B cell (primary cell): ENCODE measurements at regions of chr5 and their contacts with region 1.

Region 1: DNA sequence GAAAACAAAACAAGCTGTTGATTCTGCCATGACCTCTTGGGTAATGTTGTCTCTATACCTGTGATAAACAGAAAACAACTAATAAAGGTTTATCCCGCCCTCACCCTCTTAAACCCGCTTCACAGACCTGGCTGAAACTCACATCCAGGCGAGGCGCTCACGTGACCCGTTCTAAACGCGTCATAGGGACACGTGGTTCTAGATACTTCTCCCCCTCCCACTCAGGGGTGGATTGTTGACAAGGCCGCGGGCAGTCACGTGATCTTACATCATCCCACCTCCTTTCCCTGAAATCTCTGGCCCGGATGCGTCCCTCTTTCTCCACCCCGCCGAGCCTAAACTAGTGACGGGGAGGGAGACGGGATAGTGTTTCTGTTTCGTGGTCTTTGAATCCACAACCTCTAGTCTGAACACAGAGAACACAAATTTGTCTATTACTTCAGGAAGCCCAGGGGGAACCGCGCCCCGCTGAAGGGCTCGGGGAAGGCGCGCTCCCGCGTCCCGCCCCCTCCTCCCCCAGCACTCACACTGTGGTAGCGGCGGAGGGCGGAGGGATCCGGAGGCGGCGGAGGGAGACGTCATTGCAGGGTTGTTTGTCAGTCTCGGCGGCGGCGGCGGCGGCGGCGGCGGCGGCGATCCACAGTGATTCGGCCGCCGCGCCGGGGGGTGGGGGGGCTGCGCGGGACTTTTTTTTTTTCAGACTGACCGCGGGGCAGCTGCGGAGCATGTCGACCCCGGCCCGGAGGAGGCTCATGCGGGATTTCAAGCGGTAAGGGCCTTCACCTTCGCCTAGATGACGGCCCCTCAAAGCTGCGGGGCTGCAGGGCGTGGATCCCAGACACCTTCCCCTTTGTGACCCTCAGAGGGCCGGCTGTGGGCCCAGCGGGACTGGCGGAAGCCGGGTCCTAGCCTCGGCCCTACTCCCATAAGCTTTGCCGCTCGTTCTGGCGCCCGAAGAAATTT is at the start of gene UBE2B:
- DNase-seq: peak; percentile 99
- ATAC-seq: peak; percentile 79
- H3K4me3 ChIP-seq: peak within 1 kb of the TSS; percentile 78 to 99 (median 92)
- H3K4me3 Mint-ChIP-seq: peak within 1 kb of the TSS; percentile 98
- H3K27ac ChIP-seq: peak within 1 kb of the TSS; percentile 97 to 99
- H3K27ac Mint-ChIP-seq: peak within 1 kb of the TSS; percentile 100
- H3K4me1 ChIP-seq: peaks cover 24 to 32% of the 10 kb centered on the region in 2 donors
- H3K4me1 Mint-ChIP-seq: peaks cover 48% of the 10 kb centered on the region
- H3K27me3 ChIP-seq: no peaks in the 10 kb centered on the region
- H3K27me3 Mint-ChIP-seq: no peaks in the 10 kb centered on the region
- CTCF ChIP-seq: no peak
- total RNA-seq, gene UBE2B: 106 and 110 TPM in 2 replicates

Region 2: GRCh38 chr5:134304311-134304710 is 66.8 kb before region 1 on chr5:
- CTCF ChIA-PET with region 1: interaction called, 3 read pairs
- POLR2A ChIA-PET with region 1: no interaction called
- intact Hi-C with region 1: loop called (anchors 5 kb)
- DNase-seq: no peak
- ATAC-seq: no peak
- H3K4me3 ChIP-seq: no peak overlapping the region
- H3K4me3 Mint-ChIP-seq: no peak overlapping the region
- H3K27ac ChIP-seq: no peak overlapping the region
- H3K27ac Mint-ChIP-seq: no peak overlapping the region
- H3K4me1 ChIP-seq: peaks cover 0 to 2% of the 10 kb centered on the region in 2 donors
- H3K4me1 Mint-ChIP-seq: no peaks in the 10 kb centered on the region
- H3K27me3 ChIP-seq: no peaks in the 10 kb centered on the region
- H3K27me3 Mint-ChIP-seq: no peaks in the 10 kb centered on the region
- CTCF ChIP-seq: no peak

Region 3: GRCh38 chr5:134446938-134447337 is 75.8 kb after region 1 on chr5:
- CTCF ChIA-PET with region 1: interaction called, 5 read pairs
- POLR2A ChIA-PET with region 1: no interaction called
- intact Hi-C with region 1: loop called (anchors 2 kb)
- DNase-seq: peak; percentile 84
- ATAC-seq: peak; percentile 86
- H3K4me3 ChIP-seq: peak overlapping the region in 1 of 5 experiments; percentile 38
- H3K4me3 Mint-ChIP-seq: peak overlapping the region; percentile 79
- H3K27ac ChIP-seq: peak overlapping the region; percentile 47 to 52
- H3K27ac Mint-ChIP-seq: peak overlapping the region; percentile 87
- H3K4me1 ChIP-seq: peaks cover 37 to 42% of the 10 kb centered on the region in 2 donors
- H3K4me1 Mint-ChIP-seq: peaks cover 56% of the 10 kb centered on the region
- H3K27me3 ChIP-seq: no peaks in the 10 kb centered on the region
- H3K27me3 Mint-ChIP-seq: no peaks in the 10 kb centered on the region
- CTCF ChIP-seq: no peak

Region 4: DNA sequence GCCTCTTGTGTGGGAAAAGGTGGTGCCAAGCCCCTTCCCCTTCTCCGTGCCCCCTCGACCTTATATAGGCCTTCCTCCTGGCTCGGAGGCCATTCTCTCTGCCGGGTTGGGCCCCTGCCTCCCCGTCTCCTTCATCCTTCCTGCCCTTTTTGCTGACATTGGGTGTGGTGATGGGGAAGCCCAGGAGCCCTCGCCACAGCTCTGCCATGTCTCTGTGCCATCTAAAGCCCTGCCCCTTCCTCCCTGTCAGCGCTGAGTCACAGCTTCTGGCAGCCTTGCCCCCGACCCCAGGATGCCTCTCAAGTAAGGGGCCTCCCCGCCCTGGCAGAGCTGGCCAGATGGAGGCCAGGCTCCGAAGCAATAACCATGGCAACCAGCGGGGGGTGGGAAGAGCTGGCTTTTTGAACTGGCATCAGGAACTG is 184.7 kb after region 1 on chr5:
- CTCF ChIA-PET with region 1: interaction called, 6 read pairs
- POLR2A ChIA-PET with region 1: interaction called, 5 read pairs
- intact Hi-C with region 1: loop called (anchors 1 kb)
- DNase-seq: peak; percentile 83
- ATAC-seq: peak; percentile 64
- H3K4me3 ChIP-seq: peak overlapping the region in 1 of 5 experiments; percentile 32
- H3K4me3 Mint-ChIP-seq: peak overlapping the region; percentile 83
- H3K27ac ChIP-seq: peak overlapping the region; percentile 86 to 98
- H3K27ac Mint-ChIP-seq: peak overlapping the region; percentile 97
- H3K4me1 ChIP-seq: peaks cover 37 to 58% of the 10 kb centered on the region in 2 donors
- H3K4me1 Mint-ChIP-seq: peaks cover 62% of the 10 kb centered on the region
- H3K27me3 ChIP-seq: no peaks in the 10 kb centered on the region
- H3K27me3 Mint-ChIP-seq: no peaks in the 10 kb centered on the region
- CTCF ChIP-seq: no peak

Region 5: DNA sequence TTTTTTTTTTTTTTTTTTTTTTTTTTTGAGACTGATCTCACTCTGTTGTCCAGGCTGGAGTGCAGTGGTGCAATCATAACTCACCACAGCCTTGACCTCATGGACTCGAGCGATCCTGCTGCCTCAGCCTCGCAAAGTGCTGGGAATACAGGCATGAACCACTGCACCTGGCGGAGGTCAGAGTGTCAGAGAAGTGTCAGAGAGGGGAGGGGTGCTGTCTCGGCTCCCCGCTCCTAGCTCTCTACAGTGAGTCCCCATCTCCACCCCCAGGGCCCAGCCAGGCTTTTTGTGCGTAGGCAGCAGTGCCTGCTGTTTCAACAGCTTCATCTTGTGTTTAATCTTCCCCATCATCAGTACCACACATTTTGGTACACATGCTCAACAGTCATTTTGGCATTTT is 223.2 kb after region 1 on chr5:
- CTCF ChIA-PET with region 1: no interaction called
- POLR2A ChIA-PET with region 1: no interaction called
- intact Hi-C with region 1: no loop called
- DNase-seq: no peak
- ATAC-seq: no peak
- H3K4me3 ChIP-seq: no peak overlapping the region
- H3K4me3 Mint-ChIP-seq: no peak overlapping the region
- H3K27ac ChIP-seq: no peak overlapping the region
- H3K27ac Mint-ChIP-seq: no peak overlapping the region
- H3K4me1 ChIP-seq: no peaks in the 10 kb centered on the region
- H3K4me1 Mint-ChIP-seq: no peaks in the 10 kb centered on the region
- H3K27me3 ChIP-seq: no peaks in the 10 kb centered on the region
- H3K27me3 Mint-ChIP-seq: no peaks in the 10 kb centered on the region
- CTCF ChIP-seq: no peak

Region 6: GRCh38 chr5:134637161-134637582 is 266.0 kb after region 1 on chr5:
- CTCF ChIA-PET with region 1: no interaction called
- POLR2A ChIA-PET with region 1: no interaction called
- intact Hi-C with region 1: loop called (anchors 1 kb)
- DNase-seq: no peak
- ATAC-seq: no peak
- H3K4me3 ChIP-seq: no peak overlapping the region
- H3K4me3 Mint-ChIP-seq: no peak overlapping the region
- H3K27ac ChIP-seq: no peak overlapping the region
- H3K27ac Mint-ChIP-seq: no peak overlapping the region
- H3K4me1 ChIP-seq: peaks cover under 1 to 4% of the 10 kb centered on the region in 2 donors
- H3K4me1 Mint-ChIP-seq: peaks cover 6% of the 10 kb centered on the region
- H3K27me3 ChIP-seq: no peaks in the 10 kb centered on the region
- H3K27me3 Mint-ChIP-seq: no peaks in the 10 kb centered on the region
- CTCF ChIP-seq: no peak